ENCODE measurements at regions of chr5 and their contacts with region 1.

Region 1: DNA sequence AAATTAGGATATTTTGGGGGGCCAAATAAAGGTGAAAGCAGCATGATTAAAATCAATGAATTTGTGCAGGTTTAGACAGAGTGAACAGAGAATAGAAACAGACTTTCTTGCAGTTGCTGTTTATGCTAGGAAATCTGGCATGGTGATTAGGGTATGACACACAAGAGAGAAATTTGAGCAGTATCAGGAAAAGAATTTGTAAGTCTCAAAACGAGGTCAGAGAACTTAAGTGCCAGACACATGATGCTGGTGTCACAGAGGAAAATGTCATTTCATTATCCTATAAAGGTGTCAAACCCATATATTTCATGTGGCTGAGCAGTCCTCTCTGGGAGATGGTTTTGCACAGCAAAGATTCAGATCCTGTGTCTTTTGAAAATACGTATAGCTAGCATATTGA is 15.7 kb downstream of the LVRN start:
- DNase-seq: no peak
- H3K4me3 Mint-ChIP-seq: no peak overlapping the region
- H3K27ac Mint-ChIP-seq: peak overlapping the region; percentile 28
- H3K4me1 Mint-ChIP-seq: peaks cover 30% of the 10 kb centered on the region
- H3K27me3 Mint-ChIP-seq: no peaks in the 10 kb centered on the region
- CTCF ChIP-seq: no peak

Region 2: DNA sequence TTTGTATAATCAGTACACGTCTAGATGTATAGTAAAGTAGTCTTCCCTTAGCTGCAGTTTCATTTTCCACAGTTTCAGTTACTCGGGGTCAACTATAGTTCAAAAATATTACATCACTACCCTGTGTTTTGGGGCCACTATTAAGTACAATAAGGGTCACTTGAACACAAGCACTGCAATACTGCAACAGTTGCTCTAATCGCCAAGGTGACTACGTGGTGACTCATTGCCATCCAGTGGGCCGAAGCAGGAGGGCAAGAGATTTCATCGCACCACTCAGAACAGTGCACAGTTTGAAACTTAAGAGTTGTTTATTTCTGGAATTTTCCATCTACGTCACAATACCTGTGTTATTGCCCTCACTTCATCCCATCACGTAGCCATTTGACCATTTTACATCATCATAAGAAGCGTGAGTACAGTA is 54.1 kb after region 1 on chr5 and contains the start of gene ARL14EPL:
- CTCF ChIA-PET with region 1: no interaction called
- intact Hi-C with region 1: loop called (anchors 2 kb)
- DNase-seq: peak; percentile 83
- H3K4me3 Mint-ChIP-seq: no peak within 1 kb of the TSS
- H3K27ac Mint-ChIP-seq: peak within 1 kb of the TSS; percentile 55
- H3K4me1 Mint-ChIP-seq: no peaks in the 10 kb centered on the region
- H3K27me3 Mint-ChIP-seq: no peaks in the 10 kb centered on the region
- CTCF ChIP-seq: no peak
- total RNA-seq, gene ARL14EPL: 0.66 and 1.2 TPM in 2 replicates

Measured in Calu3 (cell line).